Calu3 (cell line): ENCODE measurements at regions of chr5 and their contacts with region 1.

Region 1: GRCh38 chr5:65481635-65482295 is at the start of gene ADAMTS6:
- DNase-seq: peak; percentile 63
- H3K4me3 Mint-ChIP-seq: no peak within 1 kb of the TSS
- H3K27ac Mint-ChIP-seq: peak within 1 kb of the TSS; percentile 28
- H3K4me1 Mint-ChIP-seq: no peaks in the 10 kb centered on the region
- H3K27me3 Mint-ChIP-seq: no peaks in the 10 kb centered on the region
- CTCF ChIP-seq: no peak
- total RNA-seq, gene ADAMTS6: 0.86 and 1.2 TPM in 2 replicates

Region 2: GRCh38 chr5:64634997-64635686 is 846.6 kb before region 1 on chr5:
- CTCF ChIA-PET with region 1: no interaction called
- intact Hi-C with region 1: loop called (anchors 1 kb)
- DNase-seq: no peak
- H3K4me3 Mint-ChIP-seq: no peak overlapping the region
- H3K27ac Mint-ChIP-seq: no peak overlapping the region
- H3K4me1 Mint-ChIP-seq: no peaks in the 10 kb centered on the region
- H3K27me3 Mint-ChIP-seq: peaks cover 16% of the 10 kb centered on the region
- CTCF ChIP-seq: peak; percentile 46

Region 3: DNA sequence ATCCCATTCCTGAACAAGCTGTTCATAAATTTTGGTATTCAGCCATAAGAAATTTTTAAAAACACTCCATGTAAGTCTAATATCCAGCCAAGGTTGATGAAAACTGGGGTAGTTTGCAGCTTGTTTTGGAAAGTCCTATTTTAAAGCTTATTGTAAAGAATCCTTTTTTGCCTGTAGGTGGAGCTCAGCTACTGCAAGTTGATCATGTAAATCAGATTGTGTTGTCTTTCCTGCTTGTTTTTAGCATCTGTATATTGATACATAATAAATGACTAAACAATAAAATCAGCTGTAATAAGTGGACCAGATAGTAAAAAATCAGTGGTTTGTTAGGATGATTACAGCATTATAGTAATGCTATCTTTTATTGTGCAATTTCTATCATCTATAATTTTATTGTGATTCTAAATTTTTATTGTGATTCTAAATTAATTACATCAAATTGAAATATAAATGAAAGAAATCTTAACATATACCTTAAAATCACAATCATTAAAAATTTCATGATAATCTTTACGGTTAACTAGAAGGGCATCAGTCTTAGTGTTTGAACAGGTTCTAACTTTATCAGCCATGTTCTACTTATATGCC is 670.6 kb before region 1 on chr5:
- CTCF ChIA-PET with region 1: interaction called, 26 read pairs
- intact Hi-C with region 1: loop called (anchors 1 kb)
- DNase-seq: peak; percentile 7
- H3K4me3 Mint-ChIP-seq: no peak overlapping the region
- H3K27ac Mint-ChIP-seq: no peak overlapping the region
- H3K4me1 Mint-ChIP-seq: peaks cover 13% of the 10 kb centered on the region
- H3K27me3 Mint-ChIP-seq: no peaks in the 10 kb centered on the region
- CTCF ChIP-seq: peak; percentile 27

Region 4: DNA sequence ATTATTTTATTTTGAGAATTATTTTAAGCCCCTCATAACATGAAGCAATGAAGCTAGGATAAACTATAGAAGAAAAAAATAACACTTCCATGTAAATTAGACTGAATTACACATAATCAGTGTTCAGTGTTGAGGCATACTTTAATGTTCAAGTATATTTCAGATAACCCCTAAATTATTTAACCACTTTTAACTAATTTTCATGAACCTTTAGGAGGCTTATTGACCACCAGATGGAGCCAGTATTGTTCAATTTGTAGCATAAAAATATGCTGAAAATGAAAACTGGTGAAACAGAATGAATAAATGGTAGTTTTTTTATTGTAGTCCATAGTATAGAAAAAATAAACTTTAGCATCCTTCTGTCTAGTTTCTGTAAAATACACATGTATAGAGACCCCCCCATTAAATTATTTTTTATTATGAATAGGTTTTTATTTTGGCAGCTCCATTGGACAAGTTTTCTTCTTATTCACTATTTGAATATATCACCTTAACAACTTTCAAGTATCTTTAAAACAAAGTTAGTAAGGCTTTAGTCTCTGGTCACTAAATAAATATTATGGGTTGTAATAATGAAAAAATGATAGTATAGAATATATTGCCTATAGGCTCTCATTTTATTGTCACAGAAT is 522.9 kb before region 1 on chr5:
- CTCF ChIA-PET with region 1: interaction called, 3 read pairs
- intact Hi-C with region 1: loop called (anchors 1 kb)
- DNase-seq: no peak
- H3K4me3 Mint-ChIP-seq: no peak overlapping the region
- H3K27ac Mint-ChIP-seq: no peak overlapping the region
- H3K4me1 Mint-ChIP-seq: no peaks in the 10 kb centered on the region
- H3K27me3 Mint-ChIP-seq: no peaks in the 10 kb centered on the region
- CTCF ChIP-seq: peak; percentile 26

Region 5: GRCh38 chr5:65076251-65076869 is 405.4 kb before region 1 on chr5:
- CTCF ChIA-PET with region 1: interaction called, 4 read pairs
- intact Hi-C with region 1: loop called (anchors 5 kb)
- DNase-seq: peak; percentile 52
- H3K4me3 Mint-ChIP-seq: no peak overlapping the region
- H3K27ac Mint-ChIP-seq: no peak overlapping the region
- H3K4me1 Mint-ChIP-seq: no peaks in the 10 kb centered on the region
- H3K27me3 Mint-ChIP-seq: peaks cover 12% of the 10 kb centered on the region
- CTCF ChIP-seq: peak; percentile 26

Region 6: DNA sequence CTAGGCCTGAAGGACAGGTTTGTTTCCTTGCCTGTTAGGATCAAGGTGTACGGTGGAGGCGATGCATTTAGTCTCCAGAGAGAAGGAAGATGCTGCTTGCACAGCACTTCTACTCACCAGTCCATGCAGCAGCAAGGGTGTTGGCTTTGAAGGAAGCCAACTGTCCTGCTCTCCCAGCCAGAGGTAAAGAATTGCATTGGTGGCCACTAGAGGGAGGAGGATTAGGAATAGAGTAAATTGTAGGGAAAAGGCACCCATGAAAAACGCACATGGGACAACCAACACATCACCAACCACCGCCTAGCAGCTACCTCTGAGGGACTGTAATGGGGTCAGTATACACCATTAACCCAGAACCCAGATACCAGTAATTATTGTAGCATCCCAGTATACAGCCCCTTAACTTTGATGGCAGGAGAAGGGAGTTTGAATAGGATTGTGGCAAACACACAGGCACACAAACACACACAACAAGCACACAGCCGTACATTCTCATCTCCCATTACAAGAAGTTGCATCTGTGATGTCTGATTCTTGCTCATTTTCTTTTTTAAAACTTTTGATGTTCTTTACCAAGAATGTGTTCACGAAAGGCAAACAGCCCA is 267.7 kb before region 1 on chr5:
- CTCF ChIA-PET with region 1: no interaction called
- intact Hi-C with region 1: loop called (anchors 5 kb)
- DNase-seq: peak; percentile 50
- H3K4me3 Mint-ChIP-seq: no peak overlapping the region
- H3K27ac Mint-ChIP-seq: no peak overlapping the region
- H3K4me1 Mint-ChIP-seq: no peaks in the 10 kb centered on the region
- H3K27me3 Mint-ChIP-seq: no peaks in the 10 kb centered on the region
- CTCF ChIP-seq: peak; percentile 70